ENCODE measurements at regions of chr1 and their contacts with region 1.

Region 1: GRCh38 chr1:9004700-9005394 is 21.4 kb downstream of the SLC2A7 start:
- DNase-seq: peak; percentile 91
- ATAC-seq: peak; percentile 66
- H3K4me3 Mint-ChIP-seq: no peak overlapping the region
- H3K27ac Mint-ChIP-seq: no peak overlapping the region
- H3K4me1 Mint-ChIP-seq: peaks cover 9% of the 10 kb centered on the region
- H3K27me3 Mint-ChIP-seq: no peaks in the 10 kb centered on the region
- CTCF ChIP-seq: peak; percentile 96

Region 2: GRCh38 chr1:8651236-8651890 is 353.5 kb before region 1 on chr1:
- CTCF ChIA-PET with region 1: no interaction called
- POLR2A ChIA-PET with region 1: no interaction called
- DNase-seq: no peak
- ATAC-seq: no peak
- H3K4me3 Mint-ChIP-seq: no peak overlapping the region
- H3K27ac Mint-ChIP-seq: peak overlapping the region; percentile 69
- H3K4me1 Mint-ChIP-seq: peaks cover 49% of the 10 kb centered on the region
- H3K27me3 Mint-ChIP-seq: no peaks in the 10 kb centered on the region
- CTCF ChIP-seq: no peak

Region 3: DNA sequence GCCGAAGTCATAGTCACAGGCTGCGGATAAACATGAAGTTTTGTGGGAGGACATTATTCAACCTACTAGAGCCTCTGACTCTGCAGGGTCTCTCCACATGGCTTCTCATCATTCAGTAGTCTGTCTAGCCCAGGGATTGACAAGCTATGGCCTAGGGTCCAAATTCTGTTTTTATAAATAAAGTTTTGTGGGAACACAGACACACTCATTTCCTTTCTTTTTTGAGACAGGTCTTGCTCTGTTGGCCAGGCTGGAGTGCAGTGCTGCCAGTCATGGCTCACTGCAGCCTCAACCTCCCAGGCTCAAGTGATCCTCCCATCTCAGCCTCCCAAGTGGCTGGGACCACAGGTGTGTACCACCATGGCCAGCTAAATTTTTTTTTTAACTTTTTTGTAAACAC is 118.3 kb before region 1 on chr1:
- CTCF ChIA-PET with region 1: interaction called, 12 read pairs
- POLR2A ChIA-PET with region 1: no interaction called
- DNase-seq: no peak
- ATAC-seq: no peak
- H3K4me3 Mint-ChIP-seq: no peak overlapping the region
- H3K27ac Mint-ChIP-seq: no peak overlapping the region
- H3K4me1 Mint-ChIP-seq: peaks cover 12% of the 10 kb centered on the region
- H3K27me3 Mint-ChIP-seq: peaks cover 8% of the 10 kb centered on the region
- CTCF ChIP-seq: no peak

Region 4: DNA sequence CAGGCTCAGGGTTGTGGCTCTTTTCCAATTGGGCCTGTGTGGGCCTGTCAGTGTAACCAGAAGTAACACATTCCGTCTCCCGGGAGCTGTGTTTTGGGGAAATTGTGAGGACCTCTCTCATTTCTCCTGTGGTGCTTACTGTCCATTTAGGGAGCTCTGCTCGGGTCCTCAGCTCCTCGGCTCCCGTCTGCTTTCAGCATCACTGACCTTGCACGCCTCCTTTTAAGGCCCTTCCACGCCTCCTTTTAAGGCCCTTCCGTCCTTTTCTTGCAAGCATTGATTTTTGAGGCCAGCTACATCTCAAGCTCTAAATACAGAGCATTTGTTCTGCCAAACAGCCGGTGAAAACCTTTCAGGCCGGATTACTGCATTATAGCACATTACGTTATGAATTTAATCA is 49.4 kb before region 1 on chr1:
- CTCF ChIA-PET with region 1: interaction called, 11 read pairs
- POLR2A ChIA-PET with region 1: no interaction called
- DNase-seq: no peak
- ATAC-seq: no peak
- H3K4me3 Mint-ChIP-seq: no peak overlapping the region
- H3K27ac Mint-ChIP-seq: no peak overlapping the region
- H3K4me1 Mint-ChIP-seq: peaks cover 9% of the 10 kb centered on the region
- H3K27me3 Mint-ChIP-seq: no peaks in the 10 kb centered on the region; the same call in 1 of the 2 replicates
- CTCF ChIP-seq: no peak

Region 5: GRCh38 chr1:9018333-9018732 is 13.5 kb after region 1 on chr1:
- CTCF ChIA-PET with region 1: interaction called, 35 read pairs
- POLR2A ChIA-PET with region 1: no interaction called
- DNase-seq: no peak
- ATAC-seq: no peak
- H3K4me3 Mint-ChIP-seq: no peak overlapping the region
- H3K27ac Mint-ChIP-seq: no peak overlapping the region
- H3K4me1 Mint-ChIP-seq: no peaks in the 10 kb centered on the region
- H3K27me3 Mint-ChIP-seq: no peaks in the 10 kb centered on the region
- CTCF ChIP-seq: no peak

Region 6: GRCh38 chr1:9110669-9111356 is 106.0 kb after region 1 on chr1:
- CTCF ChIA-PET with region 1: interaction called, 23 read pairs
- POLR2A ChIA-PET with region 1: no interaction called
- DNase-seq: peak; percentile 98
- ATAC-seq: peak; percentile 96
- H3K4me3 Mint-ChIP-seq: no peak overlapping the region
- H3K27ac Mint-ChIP-seq: no peak overlapping the region
- H3K4me1 Mint-ChIP-seq: no peaks in the 10 kb centered on the region
- H3K27me3 Mint-ChIP-seq: no peaks in the 10 kb centered on the region
- CTCF ChIP-seq: peak; percentile 94

Measured in WTC11 (cell line).